ENCODE measurements at regions of chr20 and their contacts with region 1.

Region 1: DNA sequence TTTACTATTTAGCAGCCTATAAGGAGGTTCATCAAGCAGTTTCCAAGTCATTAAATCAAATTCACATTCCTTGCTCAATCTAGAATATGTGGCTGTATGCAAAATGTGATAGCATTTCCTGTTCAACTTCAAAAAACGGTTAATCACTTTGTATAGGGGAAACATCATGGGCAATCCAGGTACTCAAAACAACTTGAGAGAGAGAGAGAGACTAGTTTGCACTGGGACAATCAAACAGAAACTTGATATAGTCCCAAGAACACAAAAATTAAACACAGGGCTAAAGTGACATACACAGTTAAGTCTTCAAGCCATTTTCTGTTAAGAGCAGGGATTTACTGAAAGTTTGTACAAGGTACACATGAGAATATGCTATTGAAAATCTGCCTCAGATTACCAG is 7.4 kb downstream of the CPNE1 start:
- DNase-seq: no peak
- ATAC-seq: no peak
- H3K4me3 ChIP-seq: no peak overlapping the region
- H3K27ac ChIP-seq: no peak overlapping the region
- H3K4me1 ChIP-seq: peaks cover 3 to 66% (median 58%) of the 10 kb centered on the region in 9 donors
- H3K27me3 ChIP-seq: no peaks in the 10 kb centered on the region
- CTCF ChIP-seq: no peak

Region 2: DNA sequence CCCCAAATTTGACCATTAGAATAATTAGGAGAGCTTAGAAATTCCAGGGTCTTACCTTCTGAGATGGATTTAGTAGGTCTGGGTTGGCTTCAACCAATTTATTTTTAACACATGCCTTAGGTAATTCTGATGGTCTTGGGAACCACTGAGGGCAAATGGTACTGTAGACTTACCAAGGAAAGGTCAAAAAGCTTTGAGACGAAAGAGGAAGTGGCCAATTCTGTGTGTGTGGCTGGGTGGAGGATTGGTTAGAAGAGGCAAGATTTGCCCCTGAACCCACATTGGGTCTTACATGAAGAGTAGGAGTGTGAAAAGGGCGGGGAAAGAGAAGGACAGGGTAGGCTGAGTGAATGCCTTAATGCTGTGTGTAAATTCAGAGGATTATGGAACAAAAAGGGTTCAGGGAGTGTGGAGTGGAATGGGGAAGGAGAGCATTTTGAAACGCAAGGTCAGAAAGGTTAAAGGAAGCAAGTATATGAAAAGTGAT is 1291.5 kb before region 1 on chr20:
- intact Hi-C with region 1: loop called in 1 of 10 experiments (anchors 5 kb)
- DNase-seq: no peak
- ATAC-seq: no peak
- H3K4me3 ChIP-seq: peak overlapping the region in 1 of 10 donors; percentile 9
- H3K27ac ChIP-seq: peak overlapping the region in 3 of 10 donors; percentile 19 to 54 (median 43)
- H3K4me1 ChIP-seq: peaks cover 3 to 54% (median 40%) of the 10 kb centered on the region in 9 donors
- H3K27me3 ChIP-seq: no peaks in the 10 kb centered on the region
- CTCF ChIP-seq: no peak

Measured in heart right ventricle (tissue), 16 donors.